Activated naive CD4-positive, alpha-beta T cell treated with anti-CD3 and anti-CD28 coated beads, Interleukin-2, amount 10 ng/mL, durations not matched to agents 7 days and 5 days (primary cell): ENCODE measurements at regions of chr5 and their contacts with region 1.

Region 1: GRCh38 chr5:176596689-176597416 is 13.1 kb downstream of the GPRIN1 start:
- DNase-seq: peak; percentile 77
- H3K4me3 Mint-ChIP-seq: peak overlapping the region; percentile 64
- H3K27ac Mint-ChIP-seq: peak overlapping the region; percentile 46
- H3K4me1 Mint-ChIP-seq: peaks cover 9% of the 10 kb centered on the region
- H3K27me3 Mint-ChIP-seq: peaks cover 69% of the 10 kb centered on the region

Region 2: GRCh38 chr5:176341325-176342157 is 255.3 kb before region 1 on chr5:
- CTCF ChIA-PET with region 1: no interaction called
- DNase-seq: no peak
- H3K4me3 Mint-ChIP-seq: no peak overlapping the region
- H3K27ac Mint-ChIP-seq: no peak overlapping the region
- H3K4me1 Mint-ChIP-seq: no peaks in the 10 kb centered on the region
- H3K27me3 Mint-ChIP-seq: no peaks in the 10 kb centered on the region

Region 3: DNA sequence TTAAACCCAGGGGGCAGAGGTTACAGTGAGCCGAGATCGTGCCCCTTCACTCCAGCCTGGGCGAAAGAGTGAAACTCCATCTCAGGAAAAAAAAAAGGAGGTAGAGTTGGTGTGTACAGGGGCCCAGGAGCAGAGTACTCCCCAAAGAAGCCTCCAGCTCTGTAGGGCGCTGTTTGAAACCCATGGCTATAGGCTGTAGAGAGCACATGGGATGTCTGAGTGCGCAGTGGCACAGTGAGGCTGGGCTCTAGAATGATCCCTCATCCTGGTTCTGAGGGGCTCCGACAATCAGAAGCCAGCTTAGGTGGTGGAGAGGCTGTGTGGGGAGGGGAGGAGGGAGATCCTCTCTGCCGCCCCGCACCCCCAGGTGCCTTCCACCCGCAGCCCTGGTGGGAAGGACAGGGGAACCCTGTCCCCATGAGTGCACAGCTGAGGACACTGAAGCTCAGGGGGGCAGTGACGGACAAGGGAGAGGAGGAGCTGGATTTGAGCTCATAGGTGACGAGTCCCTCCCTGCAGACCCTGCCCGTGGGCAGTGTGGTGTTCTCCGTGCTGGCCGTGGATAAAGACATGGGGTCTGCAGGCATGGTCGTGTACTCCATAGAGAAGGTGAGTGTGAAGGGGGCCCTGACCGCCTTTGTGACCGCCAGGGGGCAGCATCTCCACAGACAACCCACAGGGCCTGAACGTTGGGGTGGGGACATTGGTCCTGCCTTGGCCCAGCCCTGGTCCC is 23.1 kb before region 1 on chr5:
- CTCF ChIA-PET with region 1: interaction called, 10 read pairs
- DNase-seq: peak; percentile 83
- H3K4me3 Mint-ChIP-seq: no peak overlapping the region
- H3K27ac Mint-ChIP-seq: no peak overlapping the region
- H3K4me1 Mint-ChIP-seq: peaks cover 7% of the 10 kb centered on the region
- H3K27me3 Mint-ChIP-seq: peaks cover 34% of the 10 kb centered on the region